HCT116 (cell line): ENCODE measurements at regions of chr1 and their contacts with region 1.

Region 1: DNA sequence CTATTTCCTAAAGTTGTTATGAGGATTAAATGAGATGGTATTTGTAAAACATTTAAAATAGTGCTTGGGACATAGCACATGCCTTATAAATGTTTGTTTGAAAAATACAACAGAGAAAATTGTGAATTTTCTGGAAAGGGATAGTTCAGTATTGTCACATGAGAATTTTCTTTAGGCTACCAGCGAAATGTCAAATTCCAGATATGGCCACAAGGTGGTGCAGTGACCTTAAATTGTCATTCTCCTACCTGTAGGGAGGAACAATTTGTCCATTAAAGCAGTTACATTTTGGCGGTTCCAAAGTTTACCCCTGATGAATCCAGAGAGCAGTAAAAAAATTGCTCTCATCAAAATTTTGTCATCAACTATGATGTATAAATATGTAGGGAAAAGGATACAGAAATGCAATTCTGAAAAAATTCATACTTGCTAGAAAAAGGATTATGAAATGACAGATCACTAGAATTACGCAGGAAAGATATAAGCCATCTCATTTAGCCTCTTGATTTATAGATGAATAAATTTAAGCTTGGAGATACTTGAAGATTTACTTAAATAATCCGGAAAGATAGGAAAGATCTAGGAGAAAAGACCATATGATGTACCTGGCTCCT is 50.2 kb upstream of the TSHB start:
- DNase-seq: peak; percentile 46
- ATAC-seq: peak; percentile 69
- H3K4me3 ChIP-seq: no peak overlapping the region
- H3K27ac ChIP-seq: no peak overlapping the region
- H3K4me1 ChIP-seq: no peaks in the 10 kb centered on the region
- H3K27me3 ChIP-seq: no peaks in the 10 kb centered on the region
- CTCF ChIP-seq: peak; percentile 62 to 79 (median 71)
- POLR2A ChIP-seq: no peak
- RAD21 ChIP-seq: peak; percentile 75

Region 2: GRCh38 chr1:115041654-115042053 is 62.3 kb after region 1 on chr1:
- CTCF ChIA-PET with region 1: interaction called, 16 read pairs
- POLR2A ChIA-PET with region 1: no interaction called
- RAD21 ChIA-PET with region 1: no interaction called
- intact Hi-C with region 1: loop called (anchors 1 kb)
- DNase-seq: peak; percentile 46
- ATAC-seq: peak; percentile 86
- H3K4me3 ChIP-seq: no peak overlapping the region
- H3K27ac ChIP-seq: no peak overlapping the region
- H3K4me1 ChIP-seq: no peaks in the 10 kb centered on the region
- H3K27me3 ChIP-seq: no peaks in the 10 kb centered on the region
- CTCF ChIP-seq: peak; percentile 55 to 62 (median 61); a peak in 5 of 6 replicates
- POLR2A ChIP-seq: no peak
- RAD21 ChIP-seq: peak; percentile 76

Region 3: GRCh38 chr1:115112496-115113375 is 133.4 kb after region 1 on chr1:
- CTCF ChIA-PET with region 1: no interaction called
- POLR2A ChIA-PET with region 1: no interaction called
- RAD21 ChIA-PET with region 1: no interaction called
- intact Hi-C with region 1: loop called (anchors 1 kb)
- DNase-seq: peak; percentile 6
- ATAC-seq: peak; percentile 79
- H3K4me3 ChIP-seq: no peak overlapping the region
- H3K27ac ChIP-seq: no peak overlapping the region
- H3K4me1 ChIP-seq: peaks cover 12 to 30% of the 10 kb centered on the region in 2 experiments; a peak in 3 of 4 replicates
- H3K27me3 ChIP-seq: no peaks in the 10 kb centered on the region
- CTCF ChIP-seq: peak; percentile 61 to 97 (median 95); a peak in 5 of 6 replicates
- POLR2A ChIP-seq: no peak
- RAD21 ChIP-seq: peak; percentile 82

Region 4: DNA sequence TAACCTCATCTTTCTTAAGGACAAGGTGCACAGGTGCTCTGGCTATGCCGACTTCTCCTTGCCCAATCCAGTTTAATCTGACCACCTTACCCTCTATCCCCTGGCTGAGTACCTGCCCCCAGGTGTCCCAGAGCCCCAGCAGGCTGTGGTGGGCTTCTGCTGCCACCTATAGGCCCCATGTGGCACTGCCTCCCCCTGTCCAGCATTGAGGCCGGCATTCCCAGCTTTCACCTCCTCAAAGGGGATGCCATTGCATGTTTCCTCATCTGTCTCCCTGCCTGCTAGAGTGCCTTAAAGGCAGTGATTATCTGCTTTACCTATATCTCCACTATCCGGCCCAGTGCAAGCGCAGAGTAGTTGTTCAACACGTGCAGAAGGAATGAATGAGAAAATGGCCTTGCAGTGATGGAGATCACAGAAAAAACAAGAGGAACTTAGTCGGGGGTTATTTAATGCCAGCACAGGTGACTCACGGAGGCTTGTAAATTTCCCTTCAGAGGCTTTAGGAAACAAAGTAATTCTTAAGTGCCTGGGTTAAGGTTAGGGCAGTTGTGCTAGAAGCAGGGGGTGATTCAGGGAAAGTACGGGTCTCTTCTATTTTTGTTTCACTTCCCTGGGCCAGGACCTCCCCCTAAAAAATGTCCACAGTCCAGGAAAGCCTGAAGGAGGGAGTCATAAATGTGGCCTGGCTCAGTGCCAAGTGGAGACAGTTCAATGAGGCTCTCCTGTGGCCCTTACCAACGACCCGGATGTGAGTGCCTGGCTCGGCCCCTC is 490.5 kb after region 1 on chr1:
- CTCF ChIA-PET with region 1: no interaction called
- POLR2A ChIA-PET with region 1: no interaction called
- RAD21 ChIA-PET with region 1: no interaction called
- intact Hi-C with region 1: loop called (anchors 5 kb)
- DNase-seq: peak; percentile 31
- ATAC-seq: peak; percentile 97
- H3K4me3 ChIP-seq: peak overlapping the region in 1 of 2 experiments; percentile 25; a peak in 1 of 4 replicates
- H3K27ac ChIP-seq: no peak overlapping the region
- H3K4me1 ChIP-seq: peaks cover 4 to 8% of the 10 kb centered on the region in 2 experiments; a peak in 3 of 4 replicates
- H3K27me3 ChIP-seq: no peaks in the 10 kb centered on the region
- CTCF ChIP-seq: peak; percentile 83 to 98 (median 98)
- POLR2A ChIP-seq: no peak
- RAD21 ChIP-seq: peak; percentile 93

Region 5: DNA sequence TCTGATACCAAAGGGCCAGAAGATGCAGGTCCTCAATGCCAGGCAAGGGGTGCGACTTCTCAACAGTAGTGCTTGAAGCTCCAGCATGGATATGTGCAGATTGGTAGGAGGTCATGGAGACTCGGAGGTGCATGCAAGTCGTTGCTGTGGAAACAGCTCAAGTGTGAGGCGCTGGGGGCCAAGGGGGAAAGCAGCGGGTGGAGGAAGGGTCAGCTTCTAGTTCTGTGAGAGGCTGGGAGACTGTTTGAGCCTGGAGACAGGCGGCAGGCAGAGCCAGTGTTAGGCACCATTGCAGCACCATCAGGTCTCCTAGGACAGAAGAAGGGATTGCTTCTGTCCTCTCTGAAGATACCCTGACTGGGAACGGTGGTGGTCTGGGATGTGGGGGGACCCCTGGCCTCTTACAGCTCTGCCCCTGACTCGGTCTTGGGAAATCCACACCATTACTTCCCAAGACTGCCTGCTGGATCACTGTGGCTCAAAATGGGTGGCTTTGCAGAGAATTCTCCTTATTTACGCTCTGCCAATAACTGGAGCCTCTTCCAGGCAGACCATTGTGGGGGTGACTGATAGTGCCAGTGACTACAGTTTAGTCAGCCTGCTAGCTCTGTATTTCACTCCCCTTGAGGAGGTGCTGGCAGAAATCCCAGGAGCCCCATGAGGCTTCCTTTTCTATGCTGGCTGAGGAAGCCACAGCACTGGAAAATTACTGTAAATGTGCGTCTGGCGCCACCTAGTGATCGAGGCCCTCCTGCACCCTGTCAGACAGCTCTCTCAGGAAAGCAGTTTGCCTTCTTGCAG is 616.1 kb after region 1 on chr1:
- CTCF ChIA-PET with region 1: no interaction called
- POLR2A ChIA-PET with region 1: no interaction called
- RAD21 ChIA-PET with region 1: no interaction called
- intact Hi-C with region 1: loop called (anchors 5 kb)
- DNase-seq: peak; percentile 68
- ATAC-seq: peak; percentile 97
- H3K4me3 ChIP-seq: no peak overlapping the region
- H3K27ac ChIP-seq: no peak overlapping the region
- H3K4me1 ChIP-seq: peaks cover 4% of the 10 kb centered on the region in 2 experiments; a peak in 2 of 4 replicates
- H3K27me3 ChIP-seq: no peaks in the 10 kb centered on the region
- CTCF ChIP-seq: peak; percentile 76 to 97 (median 90)
- POLR2A ChIP-seq: no peak
- RAD21 ChIP-seq: peak; percentile 91